GM12878 (cell line): ENCODE measurements at regions of chr22 and their contacts with region 1.

Region 1: GRCh38 chr22:17368554-17369438 is 464 bp upstream of the CECR2 start:
- DNase-seq: peak; percentile 7
- ATAC-seq: no peak
- H3K4me3 ChIP-seq: 0 out of 2 replicates have a peak overlapping the region, but pooled peaks have one; percentile 27
- H3K27ac ChIP-seq: no peak overlapping the region
- H3K4me1 ChIP-seq: no peaks in the 10 kb centered on the region
- H3K27me3 ChIP-seq: peaks cover 6 to 22% of the 10 kb centered on the region in 2 experiments
- CTCF ChIP-seq: no peak
- EP300 ChIP-seq: no peak
- POLR2A ChIP-seq: no peak
- RAD21 ChIP-seq: no peak

Region 2: GRCh38 chr22:17334059-17334458 is 34.7 kb before region 1 on chr22:
- CTCF ChIA-PET with region 1: no interaction called
- POLR2A ChIA-PET with region 1: no interaction called
- RAD21 ChIA-PET with region 1: no interaction called
- SMC1A ChIA-PET with region 1: no interaction called
- in situ Hi-C with region 1: loop called (anchors 5 kb)
- intact Hi-C with region 1: no loop called
- DNase-seq: no peak
- ATAC-seq: no peak
- H3K4me3 ChIP-seq: no peak overlapping the region
- H3K27ac ChIP-seq: no peak overlapping the region
- H3K4me1 ChIP-seq: no peaks in the 10 kb centered on the region
- H3K27me3 ChIP-seq: no peaks in the 10 kb centered on the region; a peak in 1 of 4 replicates
- CTCF ChIP-seq: no peak
- EP300 ChIP-seq: no peak
- POLR2A ChIP-seq: no peak
- RAD21 ChIP-seq: no peak

Region 3: DNA sequence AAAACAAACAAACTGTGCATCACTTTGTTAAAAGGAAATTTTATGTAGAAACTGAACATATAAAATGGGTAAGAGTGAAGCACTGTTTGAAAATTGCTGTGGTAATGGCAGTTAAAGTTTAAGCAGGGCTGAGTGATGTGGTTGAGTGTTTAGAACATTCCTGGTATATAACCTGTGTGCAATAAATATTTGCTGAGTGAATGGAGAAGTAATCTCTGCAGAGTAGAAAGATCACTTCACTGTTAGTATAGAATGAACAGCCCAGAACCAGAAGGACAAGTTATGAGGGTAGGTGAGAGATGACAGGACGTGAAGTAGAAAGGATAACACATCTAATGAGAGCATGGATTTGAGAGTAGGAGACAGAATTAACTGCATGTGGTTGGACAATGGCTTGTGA is 27.8 kb after region 1 on chr22:
- CTCF ChIA-PET with region 1: no interaction called
- POLR2A ChIA-PET with region 1: no interaction called
- RAD21 ChIA-PET with region 1: no interaction called
- SMC1A ChIA-PET with region 1: no interaction called
- in situ Hi-C with region 1: no loop called
- intact Hi-C with region 1: no loop called
- DNase-seq: no peak
- ATAC-seq: no peak
- H3K4me3 ChIP-seq: no peak overlapping the region
- H3K27ac ChIP-seq: no peak overlapping the region
- H3K4me1 ChIP-seq: no peaks in the 10 kb centered on the region
- H3K27me3 ChIP-seq: no peaks in the 10 kb centered on the region
- CTCF ChIP-seq: no peak
- EP300 ChIP-seq: no peak
- POLR2A ChIP-seq: no peak
- RAD21 ChIP-seq: no peak